ENCODE measurements at regions of chrX and their contacts with region 1.

Region 1: GRCh38 chrX:69387567-69388487 is 116.3 kb upstream of the NALF2 start:
- DNase-seq: peak in 12 of 14 experiments; percentile 0 to 46 (median 14)
- ATAC-seq: no peak
- H3K4me3 ChIP-seq: no peak overlapping the region
- H3K4me3 Mint-ChIP-seq: no peak overlapping the region
- H3K27ac ChIP-seq: no peak overlapping the region
- H3K27ac Mint-ChIP-seq: no peak overlapping the region
- H3K4me1 ChIP-seq: no peaks in the 10 kb centered on the region
- H3K4me1 Mint-ChIP-seq: no peaks in the 10 kb centered on the region
- H3K27me3 ChIP-seq: no peaks in the 10 kb centered on the region
- H3K27me3 Mint-ChIP-seq: no peaks in the 10 kb centered on the region
- CTCF ChIP-seq: peak; percentile 12

Region 2: DNA sequence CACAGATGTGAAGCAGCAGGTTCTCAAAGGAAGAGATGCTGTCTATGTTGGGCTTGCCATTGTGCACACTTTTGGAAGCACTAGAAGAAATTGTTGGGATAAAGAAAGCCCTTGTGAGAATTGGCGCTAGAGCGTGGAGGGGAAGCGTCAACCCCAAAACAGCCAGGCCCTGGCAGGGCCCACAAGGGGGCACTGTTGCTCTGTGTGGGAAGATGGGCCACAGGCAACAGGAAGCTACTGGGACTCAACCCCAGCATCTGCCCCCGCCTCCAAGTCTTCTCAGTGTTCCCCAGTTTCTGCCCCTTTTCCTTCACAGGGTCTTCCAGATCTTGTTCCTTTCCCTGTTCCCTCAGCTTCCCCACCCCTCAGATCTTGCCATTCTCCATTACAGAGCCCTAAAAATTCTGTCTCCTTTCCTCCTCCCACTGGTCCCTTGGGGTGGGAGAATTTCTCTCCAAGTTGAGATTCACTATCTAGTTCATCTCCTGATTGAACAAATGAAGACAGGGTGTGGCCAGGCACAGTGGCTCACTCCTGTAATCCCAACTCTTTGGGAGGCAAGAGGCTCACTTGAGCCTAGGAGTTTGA is 654.8 kb before region 1 on chrX:
- CTCF ChIA-PET with region 1: no interaction called
- POLR2A ChIA-PET with region 1: no interaction called
- intact Hi-C with region 1: loop called in 1 of 2 experiments (anchors 5 kb)
- DNase-seq: peak; percentile 24 to 70 (median 52)
- ATAC-seq: peak; percentile 37
- H3K4me3 ChIP-seq: no peak overlapping the region
- H3K4me3 Mint-ChIP-seq: no peak overlapping the region
- H3K27ac ChIP-seq: no peak overlapping the region
- H3K27ac Mint-ChIP-seq: no peak overlapping the region
- H3K4me1 ChIP-seq: no peaks in the 10 kb centered on the region
- H3K4me1 Mint-ChIP-seq: no peaks in the 10 kb centered on the region
- H3K27me3 ChIP-seq: peaks cover 0 to 6% of the 10 kb centered on the region in 2 experiments
- H3K27me3 Mint-ChIP-seq: peaks cover 22% of the 10 kb centered on the region
- CTCF ChIP-seq: peak; percentile 41

Region 3: DNA sequence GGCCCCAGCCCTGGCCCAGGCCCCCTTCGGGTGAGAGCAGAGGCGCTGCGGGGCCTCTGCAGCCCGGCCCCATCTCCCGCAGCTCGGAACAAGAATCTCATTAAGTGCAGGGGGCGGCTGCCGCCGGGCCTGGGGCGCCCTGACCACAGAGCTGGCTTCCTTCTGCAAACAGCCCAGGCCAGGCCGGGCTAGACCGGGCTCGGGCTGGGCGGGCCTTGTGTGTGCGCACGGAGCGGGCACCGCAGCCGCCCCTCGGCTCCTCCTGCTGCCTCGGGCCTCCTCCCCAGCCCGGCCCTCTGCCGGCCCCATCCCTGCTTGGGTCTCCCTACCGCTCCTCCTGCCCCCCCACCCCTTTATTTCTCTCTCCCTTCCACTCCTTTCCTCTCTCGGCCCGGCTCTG is 475.7 kb before region 1 on chrX:
- CTCF ChIA-PET with region 1: no interaction called
- POLR2A ChIA-PET with region 1: no interaction called
- intact Hi-C with region 1: no loop called
- DNase-seq: no peak
- ATAC-seq: no peak
- H3K4me3 ChIP-seq: no peak overlapping the region
- H3K4me3 Mint-ChIP-seq: no peak overlapping the region
- H3K27ac ChIP-seq: no peak overlapping the region
- H3K27ac Mint-ChIP-seq: no peak overlapping the region
- H3K4me1 ChIP-seq: no peaks in the 10 kb centered on the region
- H3K4me1 Mint-ChIP-seq: no peaks in the 10 kb centered on the region
- H3K27me3 ChIP-seq: no peaks in the 10 kb centered on the region
- H3K27me3 Mint-ChIP-seq: peaks cover 8% of the 10 kb centered on the region
- CTCF ChIP-seq: no peak

Region 4: GRCh38 chrX:69493193-69493592 is 105.4 kb after region 1 on chrX:
- CTCF ChIA-PET with region 1: no interaction called
- POLR2A ChIA-PET with region 1: no interaction called
- intact Hi-C with region 1: no loop called
- DNase-seq: peak in 10 of 14 experiments; percentile 3 to 42 (median 18)
- ATAC-seq: no peak
- H3K4me3 ChIP-seq: no peak overlapping the region
- H3K4me3 Mint-ChIP-seq: no peak overlapping the region
- H3K27ac ChIP-seq: no peak overlapping the region
- H3K27ac Mint-ChIP-seq: no peak overlapping the region
- H3K4me1 ChIP-seq: no peaks in the 10 kb centered on the region
- H3K4me1 Mint-ChIP-seq: no peaks in the 10 kb centered on the region
- H3K27me3 ChIP-seq: peaks cover 0 to 9% of the 10 kb centered on the region in 2 experiments
- H3K27me3 Mint-ChIP-seq: peaks cover 23% of the 10 kb centered on the region
- CTCF ChIP-seq: no peak

Measured in CD4-positive, alpha-beta T cell (primary cell).